ENCODE measurements at regions of chr9 and their contacts with region 1.

Region 1: DNA sequence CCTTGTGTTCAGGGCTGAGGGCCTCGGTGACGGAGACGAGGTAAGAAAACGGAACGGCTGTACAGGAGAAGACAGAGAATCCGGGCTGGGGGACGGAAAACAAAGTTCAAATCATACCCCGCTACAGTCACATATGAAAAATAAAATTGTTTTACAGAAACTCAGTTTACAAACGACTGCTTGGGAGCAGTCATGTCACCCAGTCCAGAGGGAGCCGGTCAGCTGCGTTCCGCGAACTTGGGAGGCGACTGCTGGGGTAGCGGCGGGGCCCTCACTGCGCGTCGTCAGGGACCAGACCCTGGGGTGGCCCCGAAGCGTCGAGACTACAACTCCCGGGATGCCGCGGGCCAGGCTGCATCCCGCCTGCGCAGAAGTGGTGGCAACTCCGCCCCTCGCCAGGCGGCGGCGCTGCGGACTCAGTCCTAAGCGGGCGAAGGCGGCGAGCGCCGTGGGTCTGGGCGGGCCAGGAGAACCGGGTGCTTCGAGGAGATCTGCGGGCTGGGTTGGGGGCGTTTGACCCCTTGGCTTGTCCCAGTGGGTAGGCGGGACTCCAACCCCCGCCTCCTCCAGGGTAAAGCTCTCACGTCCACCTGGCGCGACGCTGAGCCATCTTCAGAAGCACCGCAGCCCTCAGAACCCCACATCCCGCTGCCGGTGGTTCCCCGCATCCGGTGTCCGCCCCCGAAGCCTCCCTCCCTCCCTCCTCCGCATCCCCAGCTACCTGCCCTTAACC is 4.0 kb downstream of the SIT1 start:
- DNase-seq: peak; percentile 95
- H3K4me3 Mint-ChIP-seq: peak overlapping the region; percentile 97
- H3K27ac Mint-ChIP-seq: peak overlapping the region; percentile 92
- H3K4me1 Mint-ChIP-seq: peaks cover 61% of the 10 kb centered on the region
- H3K27me3 Mint-ChIP-seq: no peaks in the 10 kb centered on the region

Region 2: GRCh38 chr9:35579130-35579529 is 67.6 kb before region 1 on chr9:
- CTCF ChIA-PET with region 1: no interaction called
- DNase-seq: no peak
- H3K4me3 Mint-ChIP-seq: no peak overlapping the region
- H3K27ac Mint-ChIP-seq: no peak overlapping the region
- H3K4me1 Mint-ChIP-seq: no peaks in the 10 kb centered on the region
- H3K27me3 Mint-ChIP-seq: no peaks in the 10 kb centered on the region

Region 3: DNA sequence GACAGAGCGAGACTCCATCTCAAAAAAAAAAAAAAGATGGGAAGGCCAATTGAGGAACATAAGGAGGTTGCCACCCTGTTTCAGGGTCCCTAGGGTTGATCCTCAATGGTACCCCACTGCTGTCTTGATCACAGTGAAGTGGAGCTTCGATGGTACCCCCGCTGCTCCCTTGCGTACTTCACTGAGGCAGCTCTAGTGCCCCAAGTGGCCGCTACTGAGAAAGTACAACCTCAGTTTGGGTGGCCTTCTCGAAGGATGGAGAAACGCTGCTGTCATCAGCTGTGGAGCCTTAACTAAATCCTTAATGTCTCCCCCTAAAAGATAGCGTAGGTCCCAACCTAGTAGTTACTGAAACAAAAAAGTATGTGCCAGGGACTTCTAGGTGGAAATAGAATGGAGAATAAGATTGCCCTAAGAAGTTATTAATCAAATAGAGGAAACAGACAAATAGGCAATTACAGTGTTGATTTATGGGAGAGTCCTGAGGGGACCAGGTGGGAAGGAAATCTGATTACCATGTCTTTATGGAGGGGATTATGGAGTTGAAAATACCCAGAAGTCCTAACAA is 35.4 kb before region 1 on chr9:
- CTCF ChIA-PET with region 1: interaction called, 81 read pairs
- DNase-seq: peak; percentile 70
- H3K4me3 Mint-ChIP-seq: no peak overlapping the region
- H3K27ac Mint-ChIP-seq: no peak overlapping the region
- H3K4me1 Mint-ChIP-seq: peaks cover 25% of the 10 kb centered on the region
- H3K27me3 Mint-ChIP-seq: peaks cover 27% of the 10 kb centered on the region

Region 4: DNA sequence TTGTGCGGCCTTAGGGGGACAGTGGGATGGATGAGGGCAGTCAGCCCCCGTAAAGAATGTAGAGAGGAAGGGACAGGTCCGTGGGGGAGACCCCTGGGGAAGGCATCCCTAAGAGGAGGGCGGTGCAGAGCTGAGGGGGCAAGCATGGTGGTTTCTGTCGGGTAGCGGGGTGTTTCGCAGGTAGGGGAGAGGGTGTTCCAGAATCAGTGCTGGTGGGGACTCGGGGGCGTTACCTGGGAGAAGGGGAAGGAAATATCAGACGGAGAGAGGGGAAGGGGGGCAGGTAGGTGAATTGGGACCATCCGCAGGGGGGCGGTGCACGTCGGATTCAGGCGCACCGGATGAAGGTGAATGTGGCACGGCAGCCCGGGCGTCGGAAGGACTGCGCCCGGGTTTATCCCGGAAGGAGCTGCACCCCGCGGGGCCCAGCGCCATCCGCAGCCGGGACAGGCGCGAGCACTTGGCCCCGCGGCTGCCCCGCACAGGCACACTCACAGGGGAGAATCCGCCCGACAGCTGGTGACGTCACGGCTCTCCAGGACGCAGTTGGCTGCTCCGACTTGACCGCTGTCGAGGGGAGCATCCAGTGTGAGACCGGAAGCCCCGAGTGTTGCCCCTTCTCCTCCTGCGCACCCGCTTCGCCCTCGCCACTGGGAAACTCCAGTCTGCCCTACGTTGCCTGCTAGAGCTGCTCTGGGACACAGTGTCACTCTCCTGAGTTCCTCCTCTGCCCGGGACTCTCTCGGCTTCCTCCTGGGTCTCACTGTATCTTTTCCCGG is 29.8 kb before region 1 on chr9:
- CTCF ChIA-PET with region 1: interaction called, 81 read pairs
- DNase-seq: peak; percentile 79
- H3K4me3 Mint-ChIP-seq: peak overlapping the region; percentile 80
- H3K27ac Mint-ChIP-seq: peak overlapping the region; percentile 79
- H3K4me1 Mint-ChIP-seq: peaks cover 49% of the 10 kb centered on the region
- H3K27me3 Mint-ChIP-seq: peaks cover 27% of the 10 kb centered on the region

Region 5: DNA sequence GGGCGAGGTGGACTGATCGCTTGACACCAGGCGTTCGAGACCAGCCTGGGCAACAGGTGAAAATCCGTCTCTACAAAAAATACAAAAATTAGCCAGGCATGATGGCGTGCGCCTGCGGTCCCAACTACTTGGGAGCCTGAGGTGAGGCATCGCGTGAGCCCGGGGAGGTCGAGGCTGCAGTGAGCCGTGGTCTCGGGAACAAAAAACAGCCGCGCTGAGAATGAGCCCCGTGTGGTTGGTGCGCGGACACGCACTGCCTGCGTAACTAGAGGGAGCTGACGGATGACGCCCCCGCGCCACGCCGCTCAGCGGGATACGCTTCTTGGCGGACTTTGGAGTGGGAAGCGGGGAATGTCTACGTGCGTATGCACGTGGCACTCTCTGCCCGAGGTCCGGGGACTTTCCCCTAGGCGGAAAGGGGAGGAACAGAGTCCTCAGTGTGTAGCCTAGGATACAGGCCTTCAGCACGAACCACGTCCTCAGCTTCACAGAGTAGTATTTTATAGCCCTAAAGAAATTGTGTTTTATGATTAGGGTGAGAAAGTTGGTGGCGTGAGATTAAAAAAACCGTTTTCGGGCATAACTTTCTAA is 10.9 kb after region 1 on chr9 and contains the start of gene RMRP:
- CTCF ChIA-PET with region 1: interaction called, 94 read pairs
- DNase-seq: peak; percentile 91
- H3K4me3 Mint-ChIP-seq: peak within 1 kb of the TSS; percentile 81
- H3K27ac Mint-ChIP-seq: peak within 1 kb of the TSS; percentile 96
- H3K4me1 Mint-ChIP-seq: peaks cover 69% of the 10 kb centered on the region
- H3K27me3 Mint-ChIP-seq: peaks cover 18% of the 10 kb centered on the region

Region 6: GRCh38 chr9:35664531-35665470 is 18.1 kb after region 1 on chr9 and contains the start of gene ARHGEF39:
- CTCF ChIA-PET with region 1: interaction called, 94 read pairs
- DNase-seq: peak; percentile 85
- H3K4me3 Mint-ChIP-seq: peak within 1 kb of the TSS; percentile 87
- H3K27ac Mint-ChIP-seq: peak within 1 kb of the TSS; percentile 84
- H3K4me1 Mint-ChIP-seq: peaks cover 65% of the 10 kb centered on the region
- H3K27me3 Mint-ChIP-seq: no peaks in the 10 kb centered on the region